HCT116 (cell line): ENCODE measurements at regions of chr14 and their contacts with region 1.

Region 1: GRCh38 chr14:67943947-67944346 is 124.4 kb downstream of the RAD51B start:
- DNase-seq: peak; percentile 71
- ATAC-seq: peak; percentile 82
- H3K4me3 ChIP-seq: no peak overlapping the region
- H3K27ac ChIP-seq: peak overlapping the region; percentile 88; the same call in 1 of the 2 replicates
- H3K4me1 ChIP-seq: peaks cover 21 to 42% of the 10 kb centered on the region in 2 experiments
- H3K27me3 ChIP-seq: no peaks in the 10 kb centered on the region
- CTCF ChIP-seq: peak; percentile 56 to 83 (median 74); a peak in 5 of 6 replicates
- POLR2A ChIP-seq: no peak
- RAD21 ChIP-seq: peak; percentile 89

Region 2: DNA sequence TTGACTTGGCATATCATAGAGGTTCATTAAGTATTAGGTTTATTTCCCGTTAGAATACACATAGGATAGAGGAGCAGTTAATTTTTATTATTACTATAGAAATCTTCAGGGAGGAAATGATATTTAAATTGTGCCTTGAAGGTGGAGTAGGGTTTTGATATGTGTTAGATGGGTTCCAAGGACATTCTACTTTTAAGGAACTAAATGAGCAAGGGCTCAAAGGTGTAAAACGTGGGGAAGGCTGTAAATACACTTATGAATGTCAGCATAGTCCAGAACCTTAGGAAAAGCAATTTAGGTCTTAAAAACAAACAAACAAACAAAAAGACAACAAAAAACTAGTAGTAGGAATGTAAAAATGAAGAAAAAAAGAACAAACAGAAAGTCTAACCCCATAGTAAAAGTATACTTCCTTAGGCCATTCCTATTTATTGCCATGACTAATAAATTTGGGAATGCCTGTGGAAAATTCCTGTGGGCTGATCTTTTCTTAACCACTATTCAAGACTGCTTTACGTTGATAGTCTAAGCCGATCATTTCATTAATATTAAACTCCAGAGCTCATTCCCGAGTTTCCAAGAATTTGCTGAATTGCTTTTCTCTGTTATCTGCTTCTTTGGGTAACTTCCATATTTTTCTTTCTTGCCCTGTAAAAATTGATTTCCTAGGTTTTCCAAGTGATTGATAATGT is 55.9 kb after region 1 on chr14:
- CTCF ChIA-PET with region 1: no interaction called
- POLR2A ChIA-PET with region 1: no interaction called
- RAD21 ChIA-PET with region 1: no interaction called
- intact Hi-C with region 1: no loop called
- DNase-seq: peak; percentile 48
- ATAC-seq: peak; percentile 91
- H3K4me3 ChIP-seq: peak overlapping the region in 1 of 2 experiments; percentile 35; a peak in 2 of 4 replicates
- H3K27ac ChIP-seq: peak overlapping the region; percentile 73
- H3K4me1 ChIP-seq: peaks cover 24 to 28% of the 10 kb centered on the region in 2 experiments
- H3K27me3 ChIP-seq: no peaks in the 10 kb centered on the region
- CTCF ChIP-seq: no peak
- POLR2A ChIP-seq: no peak
- RAD21 ChIP-seq: no peak

Region 3: GRCh38 chr14:68359837-68360552 is 416.0 kb after region 1 on chr14:
- CTCF ChIA-PET with region 1: no interaction called
- POLR2A ChIA-PET with region 1: no interaction called
- RAD21 ChIA-PET with region 1: no interaction called
- intact Hi-C with region 1: loop called (anchors 10 kb)
- DNase-seq: peak; percentile 37
- ATAC-seq: peak; percentile 55
- H3K4me3 ChIP-seq: no peak overlapping the region
- H3K27ac ChIP-seq: peak overlapping the region; percentile 50
- H3K4me1 ChIP-seq: peaks cover 52% of the 10 kb centered on the region in 2 experiments
- H3K27me3 ChIP-seq: no peaks in the 10 kb centered on the region
- CTCF ChIP-seq: no peak
- POLR2A ChIP-seq: peak; percentile 23
- RAD21 ChIP-seq: no peak

Region 4: DNA sequence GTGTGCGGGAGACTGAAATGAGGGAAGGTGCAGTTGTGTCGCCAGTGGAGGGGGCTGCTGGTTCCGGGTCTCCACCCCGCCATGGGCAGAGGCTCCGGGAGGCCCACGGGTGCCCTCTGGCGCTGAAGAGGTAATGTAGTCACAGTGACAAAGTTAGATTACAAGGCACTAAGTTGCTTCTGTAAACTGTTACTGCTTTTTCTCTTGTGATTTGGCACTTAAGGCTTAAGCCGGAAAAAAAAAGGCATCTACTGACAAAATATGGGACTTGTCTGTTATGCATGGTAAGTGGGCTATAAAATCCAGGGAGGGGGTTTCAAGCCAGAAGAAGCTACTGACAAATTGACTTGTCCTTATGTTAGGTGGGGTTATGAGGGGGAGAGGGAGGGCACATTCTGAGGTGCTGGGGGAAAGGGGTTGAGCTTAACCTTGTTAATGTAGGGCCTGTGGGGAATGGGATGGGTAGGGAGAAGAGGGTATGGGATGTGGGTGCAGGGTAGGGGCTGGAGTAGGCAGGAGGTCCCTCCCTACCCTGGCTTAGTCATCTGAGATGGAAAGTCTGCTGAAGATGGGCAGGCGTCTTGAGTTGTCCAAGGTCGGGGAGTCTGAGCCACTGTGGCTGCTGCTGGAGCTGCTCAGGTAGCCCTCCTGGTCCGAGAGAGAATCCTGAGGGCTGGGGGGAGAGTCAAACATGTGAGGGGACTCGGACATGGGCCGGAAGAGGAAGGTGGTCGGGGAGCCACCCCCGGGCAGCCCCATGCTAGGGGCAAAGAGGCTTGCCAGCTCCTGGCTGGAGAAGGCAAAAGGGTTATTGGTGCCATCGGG is 845.3 kb after region 1 on chr14:
- CTCF ChIA-PET with region 1: no interaction called
- POLR2A ChIA-PET with region 1: interaction called, 10 read pairs
- RAD21 ChIA-PET with region 1: no interaction called
- intact Hi-C with region 1: loop called (anchors 2 kb)
- DNase-seq: no peak
- ATAC-seq: peak; percentile 14
- H3K4me3 ChIP-seq: peak overlapping the region; percentile 83 to 89
- H3K27ac ChIP-seq: peak overlapping the region; percentile 99
- H3K4me1 ChIP-seq: peaks cover 58 to 83% of the 10 kb centered on the region in 2 experiments
- H3K27me3 ChIP-seq: no peaks in the 10 kb centered on the region
- CTCF ChIP-seq: peak in 2 of 3 experiments; percentile 67 to 74; a peak in 4 of 6 replicates
- POLR2A ChIP-seq: no peak
- RAD21 ChIP-seq: no peak

Region 5: GRCh38 chr14:68816262-68816942 is 872.5 kb after region 1 on chr14:
- CTCF ChIA-PET with region 1: interaction called, 10 read pairs
- POLR2A ChIA-PET with region 1: no interaction called
- RAD21 ChIA-PET with region 1: no interaction called
- intact Hi-C with region 1: loop called (anchors 2 kb)
- DNase-seq: no peak
- ATAC-seq: peak; percentile 69
- H3K4me3 ChIP-seq: peak overlapping the region; percentile 35 to 57
- H3K27ac ChIP-seq: peak overlapping the region; percentile 99
- H3K4me1 ChIP-seq: peaks cover 78 to 80% of the 10 kb centered on the region in 2 experiments
- H3K27me3 ChIP-seq: no peaks in the 10 kb centered on the region
- CTCF ChIP-seq: peak in 2 of 3 experiments; percentile 84 to 93; a peak in 4 of 6 replicates
- POLR2A ChIP-seq: no peak
- RAD21 ChIP-seq: no peak